Activated B cell treated with CpG ODN at 0.5 μM for 24 hours (primary cell): ENCODE measurements at regions of chr9 and their contacts with region 1.

Region 1: DNA sequence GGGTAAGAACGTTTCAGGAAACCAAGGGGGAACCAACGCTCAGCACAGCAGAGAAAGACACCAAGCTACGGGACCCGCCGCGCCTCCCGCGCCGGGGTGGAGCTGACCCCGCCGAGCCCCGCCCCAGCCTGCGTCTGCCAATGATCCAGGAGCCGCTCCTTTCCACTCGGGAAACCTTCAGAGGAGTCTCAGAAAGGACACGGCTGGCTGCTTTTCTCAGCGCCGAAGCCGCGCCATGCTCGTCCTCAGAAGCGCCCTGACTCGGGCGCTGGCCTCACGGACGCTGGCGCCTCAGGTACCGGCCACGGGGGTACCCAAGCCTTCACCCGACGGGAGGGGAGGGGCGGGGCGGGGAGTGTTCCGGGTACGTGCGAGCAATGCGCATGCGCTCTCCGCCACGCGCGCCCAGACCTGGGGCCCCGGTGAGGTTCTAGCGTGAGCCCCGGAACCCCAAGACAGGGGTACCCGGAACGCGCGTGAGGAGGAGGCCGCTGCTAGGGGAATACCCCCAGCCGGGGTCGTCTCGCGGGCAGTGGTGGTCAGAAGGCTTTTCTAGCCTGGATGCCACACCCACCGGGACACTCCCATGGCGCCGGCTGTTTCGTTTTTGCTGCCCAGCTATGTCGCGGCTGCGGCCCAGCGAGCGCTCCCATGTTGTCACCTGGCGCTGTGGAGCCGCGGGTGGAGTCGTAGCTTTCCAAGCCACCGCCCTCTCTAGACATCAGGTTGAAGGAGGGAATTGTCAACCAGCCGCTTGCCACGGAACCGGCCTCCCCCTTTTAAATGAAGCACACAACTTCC is at the start of gene NIPSNAP3A:
- DNase-seq: peak; percentile 91
- ATAC-seq: peak; percentile 89
- H3K4me3 Mint-ChIP-seq: peak within 1 kb of the TSS; percentile 99
- H3K27ac Mint-ChIP-seq: peak within 1 kb of the TSS; percentile 99
- H3K4me1 Mint-ChIP-seq: peaks cover 34% of the 10 kb centered on the region
- H3K27me3 Mint-ChIP-seq: no peaks in the 10 kb centered on the region
- CTCF ChIP-seq: no peak
- total RNA-seq, gene NIPSNAP3A: 21.9 and 22.7 TPM in 2 replicates

Region 2: DNA sequence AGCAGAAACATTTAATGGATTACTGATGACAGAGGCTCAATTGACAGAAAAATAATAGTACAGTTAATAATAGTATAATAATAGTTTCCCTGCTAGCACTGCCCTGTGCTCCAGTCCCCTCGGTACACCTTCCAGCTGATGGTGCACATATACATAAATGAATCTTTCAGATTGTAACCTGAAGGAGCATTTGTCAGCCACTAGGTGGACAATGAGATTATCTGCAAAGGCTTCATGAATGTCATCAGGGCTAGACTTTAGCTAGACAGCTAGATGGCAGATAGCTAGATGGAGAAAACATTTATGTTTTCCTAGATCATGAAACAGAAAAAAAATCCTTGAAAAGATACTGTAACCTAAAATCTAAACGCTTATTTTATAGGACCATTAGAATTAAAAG is 958.1 kb before region 1 on chr9:
- CTCF ChIA-PET with region 1: no interaction called
- POLR2A ChIA-PET with region 1: no interaction called
- intact Hi-C with region 1: loop called (anchors 5 kb)
- DNase-seq: no peak
- ATAC-seq: no peak
- H3K4me3 Mint-ChIP-seq: no peak overlapping the region
- H3K27ac Mint-ChIP-seq: no peak overlapping the region
- H3K4me1 Mint-ChIP-seq: no peaks in the 10 kb centered on the region
- H3K27me3 Mint-ChIP-seq: no peaks in the 10 kb centered on the region
- CTCF ChIP-seq: no peak

Region 3: GRCh38 chr9:104386425-104387069 is 361.2 kb before region 1 on chr9:
- CTCF ChIA-PET with region 1: no interaction called
- POLR2A ChIA-PET with region 1: no interaction called
- intact Hi-C with region 1: loop called (anchors 2 kb)
- DNase-seq: no peak
- ATAC-seq: no peak
- H3K4me3 Mint-ChIP-seq: no peak overlapping the region
- H3K27ac Mint-ChIP-seq: no peak overlapping the region
- H3K4me1 Mint-ChIP-seq: no peaks in the 10 kb centered on the region
- H3K27me3 Mint-ChIP-seq: no peaks in the 10 kb centered on the region
- CTCF ChIP-seq: no peak

Region 4: GRCh38 chr9:104456831-104457230 is 290.9 kb before region 1 on chr9:
- CTCF ChIA-PET with region 1: no interaction called
- POLR2A ChIA-PET with region 1: no interaction called
- intact Hi-C with region 1: no loop called
- DNase-seq: no peak
- ATAC-seq: no peak
- H3K4me3 Mint-ChIP-seq: no peak overlapping the region
- H3K27ac Mint-ChIP-seq: no peak overlapping the region
- H3K4me1 Mint-ChIP-seq: no peaks in the 10 kb centered on the region
- H3K27me3 Mint-ChIP-seq: no peaks in the 10 kb centered on the region
- CTCF ChIP-seq: no peak

Region 5: GRCh38 chr9:104506565-104506964 is 241.2 kb before region 1 on chr9:
- CTCF ChIA-PET with region 1: no interaction called
- POLR2A ChIA-PET with region 1: no interaction called
- intact Hi-C with region 1: no loop called
- DNase-seq: no peak
- ATAC-seq: no peak
- H3K4me3 Mint-ChIP-seq: no peak overlapping the region
- H3K27ac Mint-ChIP-seq: no peak overlapping the region
- H3K4me1 Mint-ChIP-seq: no peaks in the 10 kb centered on the region
- H3K27me3 Mint-ChIP-seq: peaks cover 2% of the 10 kb centered on the region
- CTCF ChIP-seq: no peak

Region 6: DNA sequence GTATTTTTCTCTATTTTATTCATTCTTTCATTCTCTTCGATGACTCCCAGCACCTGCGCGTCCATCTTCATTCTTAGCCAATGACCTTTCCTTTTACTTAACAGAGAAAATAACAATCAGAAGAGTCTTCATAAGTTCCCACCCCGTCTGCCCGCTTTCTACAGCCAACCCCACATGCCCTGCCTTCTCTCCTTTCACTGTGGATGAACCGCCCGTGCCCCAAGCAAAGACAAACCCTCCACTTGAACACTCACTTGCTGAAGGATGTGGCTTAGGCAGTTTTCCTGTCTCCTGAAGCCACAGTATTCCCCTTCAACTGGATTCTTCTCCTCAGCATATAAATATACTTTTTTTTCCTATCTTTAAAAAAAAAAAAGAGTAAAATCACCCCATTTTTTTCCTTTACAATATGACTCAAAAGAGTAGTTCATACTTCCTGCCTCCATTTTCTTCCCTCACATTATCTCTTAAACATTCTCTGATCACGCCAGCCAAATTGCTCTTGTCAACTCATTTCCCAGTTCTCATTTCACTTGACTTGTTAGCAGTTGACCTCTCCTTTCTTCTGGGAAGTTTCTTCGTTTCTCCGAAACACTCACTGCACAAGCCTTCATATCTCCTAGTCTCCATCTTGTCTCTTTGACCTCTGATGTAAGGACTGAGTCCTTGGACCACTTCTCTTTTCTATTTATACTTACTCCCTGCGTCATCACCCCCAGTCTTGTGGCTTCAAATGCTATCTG is 27.2 kb after region 1 on chr9:
- CTCF ChIA-PET with region 1: interaction called, 5 read pairs
- POLR2A ChIA-PET with region 1: interaction called, 43 read pairs
- intact Hi-C with region 1: loop called (anchors 2 kb)
- DNase-seq: no peak
- ATAC-seq: peak; percentile 86
- H3K4me3 Mint-ChIP-seq: no peak overlapping the region
- H3K27ac Mint-ChIP-seq: no peak overlapping the region
- H3K4me1 Mint-ChIP-seq: peaks cover 37% of the 10 kb centered on the region
- H3K27me3 Mint-ChIP-seq: no peaks in the 10 kb centered on the region
- CTCF ChIP-seq: no peak

Region 7: GRCh38 chr9:104863180-104863883 is 115.6 kb after region 1 on chr9:
- CTCF ChIA-PET with region 1: no interaction called
- POLR2A ChIA-PET with region 1: no interaction called
- intact Hi-C with region 1: loop called (anchors 5 kb)
- DNase-seq: no peak
- ATAC-seq: peak; percentile 74
- H3K4me3 Mint-ChIP-seq: no peak overlapping the region
- H3K27ac Mint-ChIP-seq: no peak overlapping the region
- H3K4me1 Mint-ChIP-seq: peaks cover 53% of the 10 kb centered on the region
- H3K27me3 Mint-ChIP-seq: no peaks in the 10 kb centered on the region
- CTCF ChIP-seq: no peak

Region 8: GRCh38 chr9:105244003-105244733 is 496.4 kb after region 1 on chr9 and contains the start of gene SLC44A1:
- CTCF ChIA-PET with region 1: no interaction called
- POLR2A ChIA-PET with region 1: interaction called, 6 read pairs
- intact Hi-C with region 1: loop called (anchors 1 kb)
- DNase-seq: peak; percentile 86
- ATAC-seq: peak; percentile 82
- H3K4me3 Mint-ChIP-seq: peak within 1 kb of the TSS; percentile 92
- H3K27ac Mint-ChIP-seq: peak within 1 kb of the TSS; percentile 84
- H3K4me1 Mint-ChIP-seq: peaks cover 29% of the 10 kb centered on the region
- H3K27me3 Mint-ChIP-seq: peaks cover 8% of the 10 kb centered on the region
- CTCF ChIP-seq: no peak
- total RNA-seq, gene SLC44A1: 9.5 and 10.1 TPM in 2 replicates

Region 9: DNA sequence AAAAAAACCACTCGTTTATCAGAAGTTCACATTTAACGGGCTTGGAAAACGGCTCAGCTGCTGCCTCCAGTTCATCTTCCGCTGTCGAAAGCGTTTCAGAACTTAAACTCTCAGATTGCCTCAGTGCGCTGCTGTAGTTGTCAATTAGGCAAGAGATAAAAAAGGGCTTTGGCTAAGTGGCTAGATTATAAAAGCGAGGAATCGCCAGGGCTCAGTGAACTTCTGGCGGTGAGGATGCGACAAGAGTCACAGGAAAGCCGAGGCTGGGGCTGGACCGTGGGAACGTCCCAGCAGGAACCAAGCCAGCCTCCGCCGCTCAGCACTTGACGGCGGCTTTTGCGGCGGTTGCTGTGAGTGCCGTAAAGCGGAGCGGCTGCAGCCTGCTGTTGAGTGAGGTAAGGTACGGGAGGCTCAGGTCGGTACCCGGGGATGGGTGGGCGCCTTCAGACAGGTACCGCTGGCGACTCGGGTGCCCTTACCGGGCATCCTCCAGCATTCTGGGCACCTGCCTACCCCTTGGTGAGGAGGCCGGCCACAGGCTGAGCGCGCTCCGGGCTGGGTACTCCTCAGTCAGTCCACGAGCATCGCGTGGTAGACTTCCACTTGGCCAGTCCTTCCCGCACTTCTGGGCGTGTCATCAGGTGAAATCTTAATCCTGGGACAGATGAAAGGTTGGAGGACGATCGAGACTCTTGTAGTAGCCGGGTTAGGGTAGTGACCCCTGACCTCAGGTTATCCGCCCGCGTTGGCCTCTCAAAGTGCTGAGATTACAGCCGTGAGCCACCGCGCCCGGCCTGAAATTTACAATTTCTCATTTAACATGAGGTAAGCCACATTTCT is 810.2 kb after region 1 on chr9 and contains the start of gene FKTN:
- CTCF ChIA-PET with region 1: no interaction called
- POLR2A ChIA-PET with region 1: no interaction called
- intact Hi-C with region 1: loop called (anchors 5 kb)
- DNase-seq: peak; percentile 72
- ATAC-seq: peak; percentile 99
- H3K4me3 Mint-ChIP-seq: peak within 1 kb of the TSS; percentile 96
- H3K27ac Mint-ChIP-seq: peak within 1 kb of the TSS; percentile 83
- H3K4me1 Mint-ChIP-seq: peaks cover 20% of the 10 kb centered on the region
- H3K27me3 Mint-ChIP-seq: no peaks in the 10 kb centered on the region
- CTCF ChIP-seq: no peak
- total RNA-seq, gene FKTN: 16.8 and 17.5 TPM in 2 replicates